ENCODE measurements at regions of chr2 and their contacts with region 1.

Region 1: GRCh38 chr2:109129921-109130722 is 1.1 kb downstream of the SH3RF3 start:
- DNase-seq: peak; percentile 19
- H3K4me3 ChIP-seq: peak overlapping the region; percentile 65 to 68
- H3K27ac ChIP-seq: peak overlapping the region in 1 of 2 donors; percentile 39
- H3K4me1 ChIP-seq: peaks cover 3% of the 10 kb centered on the region
- H3K27me3 ChIP-seq: no peaks in the 10 kb centered on the region
- CTCF ChIP-seq: no peak
- POLR2A ChIP-seq: no peak

Region 2: GRCh38 chr2:108833219-108833618 is 296.9 kb before region 1 on chr2:
- intact Hi-C with region 1: no loop called
- DNase-seq: no peak
- H3K4me3 ChIP-seq: no peak overlapping the region
- H3K27ac ChIP-seq: no peak overlapping the region
- H3K4me1 ChIP-seq: peaks cover 3% of the 10 kb centered on the region
- H3K27me3 ChIP-seq: no peaks in the 10 kb centered on the region
- CTCF ChIP-seq: no peak
- POLR2A ChIP-seq: no peak

Region 3: GRCh38 chr2:109510136-109511028 is 380.3 kb after region 1 on chr2:
- intact Hi-C with region 1: loop called (anchors 5 kb)
- DNase-seq: peak; percentile 89
- H3K4me3 ChIP-seq: no peak overlapping the region
- H3K27ac ChIP-seq: no peak overlapping the region
- H3K4me1 ChIP-seq: no peaks in the 10 kb centered on the region
- H3K27me3 ChIP-seq: no peaks in the 10 kb centered on the region
- CTCF ChIP-seq: peak; percentile 76 to 87 (median 83)
- POLR2A ChIP-seq: no peak

Measured in testis (tissue), 5 donors.